GM10248 (cell line): ENCODE measurements at regions of chr6 and their contacts with region 1.

Region 1: DNA sequence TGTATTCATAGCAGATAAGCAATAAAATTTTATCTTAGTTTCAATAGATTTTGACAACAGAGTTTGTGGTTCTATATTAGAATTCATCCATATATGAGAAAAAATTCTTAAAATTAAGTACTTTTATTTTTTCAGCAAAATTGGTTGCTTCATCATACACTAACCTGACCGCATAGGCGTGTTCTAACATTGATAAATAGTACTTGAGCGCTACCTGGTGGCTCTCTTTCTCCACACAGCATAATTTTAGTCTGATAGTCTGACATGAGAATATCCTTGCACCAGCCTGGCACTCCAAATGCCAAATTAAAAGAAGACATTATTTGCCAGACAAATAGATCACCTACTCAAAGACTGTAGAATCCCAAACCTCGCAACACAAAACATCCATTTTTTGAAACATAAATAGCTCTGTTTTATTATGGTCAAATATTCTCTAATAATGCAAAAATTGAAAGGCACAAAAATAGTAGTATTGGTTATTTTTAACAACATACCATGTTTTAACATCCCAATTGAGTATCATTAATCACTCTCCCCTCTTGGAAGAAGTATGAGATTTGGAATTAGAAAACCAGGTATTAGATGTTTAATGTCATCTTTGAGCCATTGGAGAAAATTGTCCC is 33.0 kb upstream of the FILIP1 start:
- DNase-seq: peak; percentile 46
- CTCF ChIP-seq: peak; percentile 78

Region 2: DNA sequence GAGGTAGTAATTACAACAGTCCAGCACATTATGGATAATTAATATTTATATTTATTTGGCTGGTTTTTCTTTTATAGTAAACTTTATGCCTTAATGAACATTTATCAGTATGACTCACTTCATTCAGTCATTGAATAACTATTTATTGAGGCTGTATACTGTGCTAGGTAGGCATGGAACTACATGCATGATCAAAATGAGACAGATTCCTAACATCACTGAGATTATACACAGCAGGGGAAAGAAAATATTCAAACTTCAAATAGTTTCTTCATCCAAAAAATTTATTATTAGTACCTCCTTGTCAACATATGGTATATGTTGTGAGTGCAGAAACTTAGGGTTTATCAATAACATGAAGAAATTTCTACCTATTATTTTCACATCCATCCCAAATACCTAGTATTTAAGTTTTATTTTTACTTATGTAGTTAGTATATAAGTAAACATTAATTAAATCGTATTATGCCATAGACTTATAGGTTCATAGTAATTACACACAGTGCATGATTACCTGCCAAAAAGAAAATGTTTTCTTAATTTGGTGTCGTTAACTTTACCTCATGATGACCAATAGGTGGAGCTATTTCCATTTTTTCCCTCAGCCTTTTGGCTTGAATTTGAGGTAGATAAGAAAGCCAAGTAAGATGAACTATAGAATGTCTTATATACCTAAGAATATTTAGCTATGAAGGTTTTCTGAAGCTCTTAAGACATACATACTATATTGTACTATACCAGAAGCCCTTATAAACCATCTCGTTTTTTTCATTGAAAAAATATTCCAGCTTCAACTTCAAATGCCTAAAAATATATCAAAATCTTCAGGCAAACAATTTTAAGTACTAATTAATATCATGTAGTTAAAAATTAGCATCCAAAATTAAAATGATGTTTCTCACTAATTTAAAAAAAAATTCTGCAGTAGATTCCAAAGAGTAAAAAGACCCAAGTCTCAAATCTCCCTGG is 229.5 kb before region 1 on chr6:
- CTCF ChIA-PET with region 1: interaction called, 25 read pairs
- POLR2A ChIA-PET with region 1: no interaction called
- DNase-seq: peak; percentile 39
- CTCF ChIP-seq: peak; percentile 62

Region 3: GRCh38 chr6:75306064-75306463 is 220.6 kb before region 1 on chr6:
- CTCF ChIA-PET with region 1: interaction called, 15 read pairs
- POLR2A ChIA-PET with region 1: no interaction called
- DNase-seq: no peak
- CTCF ChIP-seq: no peak

Region 4: DNA sequence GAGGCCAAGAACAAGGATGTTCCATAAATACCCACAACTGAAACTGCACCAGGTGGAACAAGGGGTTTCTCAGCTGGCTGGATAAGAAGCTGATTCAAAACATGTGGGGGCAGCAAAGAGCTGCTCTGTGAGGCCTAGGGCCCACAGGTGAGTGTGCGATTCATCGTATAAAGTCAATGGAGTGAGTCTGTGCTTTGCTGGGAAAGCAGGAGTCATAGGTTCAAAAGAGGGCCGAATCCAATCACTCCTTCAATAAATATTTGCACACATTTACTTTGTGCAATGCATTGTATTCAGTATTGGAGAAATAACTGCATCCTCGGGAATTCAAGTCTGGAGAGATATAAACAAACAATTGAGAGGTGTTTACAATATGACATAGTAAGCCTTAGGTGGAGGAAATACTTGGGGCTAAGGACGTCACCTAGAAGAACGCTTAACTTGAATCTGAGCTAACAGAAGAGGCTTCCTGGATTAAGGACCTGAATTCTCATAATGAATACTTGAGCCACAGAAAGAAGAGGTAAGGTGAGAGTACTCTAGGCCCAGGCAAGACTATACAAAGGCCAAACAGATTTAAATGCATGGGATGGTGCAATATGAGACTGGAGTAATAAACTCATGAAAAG is 158.3 kb before region 1 on chr6:
- CTCF ChIA-PET with region 1: interaction called, 11 read pairs
- POLR2A ChIA-PET with region 1: no interaction called
- DNase-seq: peak; percentile 13
- CTCF ChIP-seq: peak; percentile 32

Region 5: DNA sequence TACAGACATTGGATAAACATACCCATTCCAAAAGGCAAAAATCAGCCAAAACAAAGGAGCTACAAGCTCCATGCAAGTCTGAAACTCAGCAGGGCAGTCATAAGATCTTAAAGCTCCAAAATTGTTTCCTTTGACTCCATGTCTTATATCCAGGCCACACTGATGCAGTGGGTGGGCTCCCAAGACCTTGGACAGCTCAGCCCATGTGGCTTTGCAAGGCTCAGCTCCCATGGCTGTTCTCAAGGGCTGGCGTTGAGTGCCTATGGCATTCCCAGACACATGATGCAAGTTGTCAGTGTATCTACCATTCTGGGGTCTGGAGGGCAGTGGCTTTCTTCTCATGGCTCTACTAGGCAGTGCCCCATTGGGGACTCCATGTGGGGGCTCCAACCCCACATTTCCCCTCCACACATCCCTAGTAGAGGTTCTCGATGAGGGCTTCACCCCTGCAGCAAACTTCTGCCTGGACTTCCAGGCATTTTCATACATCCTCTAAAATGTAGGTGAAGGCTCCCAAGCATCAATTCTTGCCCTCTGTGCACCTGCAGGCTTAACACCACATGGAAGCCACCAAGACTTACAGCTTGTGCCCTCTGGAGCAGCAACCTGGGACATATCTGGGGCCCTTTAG is 39.6 kb after region 1 on chr6:
- CTCF ChIA-PET with region 1: no interaction called
- POLR2A ChIA-PET with region 1: no interaction called
- DNase-seq: no peak
- CTCF ChIP-seq: no peak